ENCODE measurements at regions of chr9 and their contacts with region 1.

Region 1: DNA sequence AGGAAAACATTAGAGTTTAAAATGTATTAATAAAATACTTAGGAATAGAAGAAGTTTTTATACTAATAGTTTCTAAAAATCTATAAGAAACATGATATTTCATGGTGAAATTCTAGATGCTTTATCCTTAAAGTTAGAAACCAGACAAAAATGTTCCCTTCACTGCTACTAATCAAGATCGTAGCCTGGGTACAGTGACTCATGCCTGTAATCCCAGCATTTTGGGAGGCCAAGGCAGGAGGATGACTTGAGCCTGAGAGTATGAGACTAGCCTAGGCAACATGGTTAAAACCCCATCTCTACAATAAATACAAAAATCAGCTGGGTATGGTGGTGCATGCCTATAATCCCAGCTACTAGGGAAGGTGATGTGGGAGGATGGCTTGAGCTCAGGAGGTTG is 30.4 kb upstream of the KLF9 start:
- DNase-seq: no peak
- H3K4me3 ChIP-seq: no peak overlapping the region
- H3K27ac ChIP-seq: no peak overlapping the region
- H3K4me1 ChIP-seq: no peaks in the 10 kb centered on the region
- H3K27me3 ChIP-seq: no peaks in the 10 kb centered on the region
- CTCF ChIP-seq: no peak

Region 2: DNA sequence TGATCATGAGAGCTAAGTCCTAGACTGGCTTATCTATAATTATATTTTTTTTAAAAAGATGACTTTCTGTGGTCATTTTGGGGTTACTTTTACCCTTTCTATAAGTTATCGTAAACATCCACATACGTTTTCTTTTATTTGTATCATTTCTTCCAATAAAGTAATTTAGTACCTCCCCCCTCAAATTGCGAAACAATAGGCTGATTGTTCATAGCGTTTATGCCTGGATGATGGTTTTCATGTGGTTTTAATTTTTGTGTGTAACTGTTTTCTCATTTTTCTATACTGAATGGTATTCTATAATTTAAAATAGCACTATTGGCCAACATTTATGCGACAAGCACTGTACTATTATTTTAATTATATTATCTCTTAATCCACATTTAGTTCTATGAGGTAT is 141.6 kb before region 1 on chr9:
- CTCF ChIA-PET with region 1: no interaction called
- POLR2A ChIA-PET with region 1: no interaction called
- intact Hi-C with region 1: no loop called
- DNase-seq: no peak
- H3K4me3 ChIP-seq: no peak overlapping the region
- H3K27ac ChIP-seq: no peak overlapping the region
- H3K4me1 ChIP-seq: no peaks in the 10 kb centered on the region
- H3K27me3 ChIP-seq: no peaks in the 10 kb centered on the region
- CTCF ChIP-seq: no peak

Region 3: DNA sequence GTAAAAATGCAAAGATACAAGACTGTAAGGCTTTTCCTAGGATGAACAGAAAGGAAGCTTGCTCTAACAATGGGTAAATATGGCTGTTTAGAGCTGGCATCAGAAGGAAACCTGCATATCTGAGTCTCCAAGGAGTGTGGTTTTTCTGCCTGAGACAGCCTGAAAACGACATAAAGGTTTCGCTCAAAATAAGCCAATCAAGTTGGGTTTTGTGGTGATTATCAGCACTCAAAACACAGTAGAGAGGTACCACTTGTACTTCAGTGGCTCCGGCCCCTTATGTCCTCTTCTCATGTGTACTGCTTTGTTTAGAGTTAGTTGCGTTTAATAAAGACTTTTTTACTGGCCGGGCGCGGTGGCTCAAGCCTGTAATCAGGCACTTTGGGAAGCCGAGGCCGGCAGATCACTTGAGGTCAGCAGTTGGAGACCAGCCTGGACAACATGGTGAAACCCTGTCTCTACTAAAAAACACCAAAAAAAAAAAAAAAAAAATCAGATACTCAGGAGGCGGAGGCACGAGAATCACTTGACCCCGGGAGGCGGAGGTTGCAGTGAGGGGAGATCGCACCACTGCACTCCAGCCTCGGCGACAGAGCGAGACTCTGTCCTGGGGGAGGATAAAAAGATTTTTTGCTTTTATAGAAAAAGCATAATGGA is 69.8 kb before region 1 on chr9:
- CTCF ChIA-PET with region 1: no interaction called
- POLR2A ChIA-PET with region 1: no interaction called
- intact Hi-C with region 1: loop called (anchors 5 kb)
- DNase-seq: no peak
- H3K4me3 ChIP-seq: no peak overlapping the region
- H3K27ac ChIP-seq: no peak overlapping the region
- H3K4me1 ChIP-seq: no peaks in the 10 kb centered on the region
- H3K27me3 ChIP-seq: no peaks in the 10 kb centered on the region
- CTCF ChIP-seq: no peak

Region 4: GRCh38 chr9:70510157-70510770 is 65.4 kb after region 1 on chr9:
- CTCF ChIA-PET with region 1: no interaction called
- POLR2A ChIA-PET with region 1: no interaction called
- intact Hi-C with region 1: no loop called
- DNase-seq: peak; percentile 25
- H3K4me3 ChIP-seq: no peak overlapping the region
- H3K27ac ChIP-seq: no peak overlapping the region
- H3K4me1 ChIP-seq: no peaks in the 10 kb centered on the region
- H3K27me3 ChIP-seq: no peaks in the 10 kb centered on the region
- CTCF ChIP-seq: peak; percentile 73